Psoas muscle (tissue), 8 donors: ENCODE measurements at regions of chr11 and their contacts with region 1.

Region 1: DNA sequence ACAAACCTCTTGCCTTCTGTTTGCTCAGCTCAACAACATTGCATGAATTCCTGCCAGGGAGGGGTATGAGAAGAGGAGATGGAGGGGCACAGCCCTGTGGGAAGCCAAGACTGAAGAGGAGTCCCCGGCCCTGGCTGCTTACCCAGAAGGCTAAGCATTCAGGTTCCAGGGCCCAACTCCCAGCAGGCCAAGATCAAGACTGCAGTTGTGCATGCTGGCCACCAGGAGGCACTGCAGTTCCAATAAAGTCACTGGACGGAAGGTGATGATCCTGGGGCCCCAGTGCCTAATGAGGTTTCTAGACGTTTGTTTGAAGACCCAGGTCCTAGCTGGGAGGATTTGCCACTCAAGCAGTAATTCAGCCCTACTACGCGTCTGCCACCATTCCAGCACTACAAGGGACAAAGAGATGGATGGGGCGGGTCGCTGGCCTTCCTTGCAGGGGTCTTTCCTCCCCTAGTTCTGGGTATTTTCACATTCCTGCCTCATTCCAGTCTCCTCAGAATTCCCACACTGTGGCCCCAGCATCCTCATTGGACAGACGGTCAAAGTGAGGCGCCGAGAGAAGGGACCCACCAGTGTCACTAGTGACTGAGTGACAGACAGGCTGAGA is 23.6 kb downstream of the ALX4 start:
- DNase-seq: peak; percentile 32 to 70
- ATAC-seq: peak; percentile 44 to 71 (median 66)
- H3K4me3 ChIP-seq: no peak overlapping the region
- H3K27ac ChIP-seq: no peak overlapping the region
- H3K4me1 ChIP-seq: no peaks in the 10 kb centered on the region
- H3K27me3 ChIP-seq: peaks cover 0 to 10% (median 0%) of the 10 kb centered on the region in 3 donors
- CTCF ChIP-seq: peak; percentile 93

Region 2: DNA sequence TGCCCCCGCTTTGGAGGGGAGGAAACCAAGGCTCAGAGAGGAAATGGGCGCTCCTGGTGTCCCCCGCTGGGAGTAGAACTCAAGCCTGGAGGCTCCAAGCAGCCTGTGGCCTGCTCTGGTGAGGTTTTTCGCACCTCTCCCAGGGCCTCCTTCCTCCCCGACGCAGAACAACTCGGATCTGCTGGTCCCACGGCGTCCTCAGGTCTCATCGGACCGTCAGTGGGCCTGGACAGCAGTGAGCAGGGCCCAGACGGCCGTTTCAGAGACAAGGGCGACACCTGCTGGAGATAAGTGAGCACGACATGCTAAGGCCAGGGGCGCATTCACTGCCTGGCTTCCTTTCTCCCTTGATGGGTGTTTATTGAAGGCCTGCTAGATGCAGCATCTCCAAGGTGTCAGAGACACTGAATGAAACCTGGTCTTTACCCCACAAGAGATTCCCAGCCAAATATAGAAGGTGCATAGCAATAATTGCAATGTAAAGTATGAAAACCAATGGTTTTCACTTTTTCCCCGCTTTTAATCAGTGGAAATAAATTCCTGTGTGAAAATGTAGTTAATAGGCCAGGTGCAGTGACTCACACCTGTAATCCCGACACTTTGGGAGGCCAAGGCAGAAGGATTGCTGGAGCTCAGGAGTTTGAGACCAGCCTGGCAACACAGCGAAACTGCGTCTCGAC is 252.1 kb after region 1 on chr11:
- intact Hi-C with region 1: loop called (anchors 2 to 5 kb)
- DNase-seq: peak; percentile 70 to 87
- ATAC-seq: peak; percentile 95 to 99 (median 96)
- H3K4me3 ChIP-seq: no peak overlapping the region
- H3K27ac ChIP-seq: no peak overlapping the region
- H3K4me1 ChIP-seq: no peaks in the 10 kb centered on the region
- H3K27me3 ChIP-seq: peaks cover 0 to 7% (median 0%) of the 10 kb centered on the region in 3 donors
- CTCF ChIP-seq: peak; percentile 96